CD8-positive, alpha-beta memory T cell (primary cell): ENCODE measurements at regions of chr11 and their contacts with region 1.

Region 1: DNA sequence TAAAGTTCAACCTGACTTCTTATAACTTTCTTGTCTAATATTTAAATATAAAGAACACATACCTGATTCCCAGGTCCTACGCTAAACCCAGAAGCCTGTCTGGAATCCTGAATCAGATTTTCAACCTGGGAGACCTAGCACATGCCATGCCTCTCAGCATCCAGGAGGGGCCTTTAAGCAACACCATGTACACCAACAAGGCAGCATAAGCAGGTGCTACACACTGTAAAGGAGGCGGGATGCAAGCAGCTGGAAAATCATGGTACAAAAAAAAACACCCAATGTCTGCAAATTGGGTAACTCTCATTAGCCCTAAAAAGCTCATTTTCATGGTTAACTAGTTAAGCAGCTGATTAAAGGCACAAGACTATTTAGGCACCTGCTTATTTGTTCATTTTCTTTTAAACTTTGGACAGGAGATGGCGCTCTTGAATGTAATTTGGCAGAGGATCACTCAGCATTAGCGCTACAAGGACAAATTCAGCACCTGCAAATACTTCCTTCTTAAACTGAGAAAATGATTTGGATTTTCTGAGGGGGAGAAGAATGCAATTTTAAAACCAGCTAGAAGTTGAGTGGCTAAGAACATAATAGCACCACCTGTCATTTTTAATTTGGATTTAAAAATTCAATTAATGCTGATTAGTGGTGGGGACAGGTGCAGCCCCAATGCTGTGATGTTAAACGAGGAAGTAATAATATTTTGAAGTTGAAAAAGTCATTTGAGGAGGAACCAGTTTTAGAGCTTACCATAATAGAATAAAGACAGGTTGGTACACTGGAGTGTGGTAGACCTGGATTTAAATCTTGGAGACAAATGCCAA is 104.0 kb downstream of the FAR1 start:
- DNase-seq: peak in 3 of 5 donors; percentile 6 to 67 (median 64)
- H3K4me3 ChIP-seq: no peak overlapping the region
- H3K4me3 Mint-ChIP-seq: no peak overlapping the region
- H3K27ac ChIP-seq: no peak overlapping the region
- H3K27ac Mint-ChIP-seq: no peak overlapping the region
- H3K4me1 ChIP-seq: no peaks in the 10 kb centered on the region
- H3K4me1 Mint-ChIP-seq: peaks cover 0 to 12% (median 7%) of the 10 kb centered on the region in 3 donors
- H3K27me3 ChIP-seq: no peaks in the 10 kb centered on the region
- H3K27me3 Mint-ChIP-seq: peaks cover 5 to 17% of the 10 kb centered on the region in 2 donors

Region 2: DNA sequence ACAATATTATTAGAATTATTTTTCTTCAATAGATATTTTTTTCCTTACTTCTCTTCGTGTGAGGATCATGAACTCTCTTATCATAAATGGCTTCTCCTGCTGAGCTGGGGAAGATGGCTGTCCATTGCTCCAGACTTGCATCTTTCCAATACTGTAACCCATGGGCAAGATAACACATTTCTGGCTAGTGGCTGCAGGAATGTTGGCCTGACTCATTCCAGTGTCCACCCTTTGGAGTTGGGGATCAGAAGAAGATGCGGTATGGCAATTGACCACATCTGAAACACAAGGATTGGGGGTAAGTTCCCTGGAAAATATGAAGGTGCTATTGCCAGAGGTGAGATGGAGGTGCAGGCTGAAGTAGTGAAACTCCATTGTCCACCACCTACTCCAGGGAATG is 11.2 kb before region 1 on chr11:
- CTCF ChIA-PET with region 1: interaction called, 10 read pairs
- POLR2A ChIA-PET with region 1: no interaction called
- DNase-seq: no peak
- H3K4me3 ChIP-seq: no peak overlapping the region
- H3K4me3 Mint-ChIP-seq: no peak overlapping the region
- H3K27ac ChIP-seq: no peak overlapping the region
- H3K27ac Mint-ChIP-seq: no peak overlapping the region
- H3K4me1 ChIP-seq: no peaks in the 10 kb centered on the region
- H3K4me1 Mint-ChIP-seq: no peaks in the 10 kb centered on the region
- H3K27me3 ChIP-seq: no peaks in the 10 kb centered on the region
- H3K27me3 Mint-ChIP-seq: peaks cover 0 to 5% of the 10 kb centered on the region in 2 donors

Region 3: DNA sequence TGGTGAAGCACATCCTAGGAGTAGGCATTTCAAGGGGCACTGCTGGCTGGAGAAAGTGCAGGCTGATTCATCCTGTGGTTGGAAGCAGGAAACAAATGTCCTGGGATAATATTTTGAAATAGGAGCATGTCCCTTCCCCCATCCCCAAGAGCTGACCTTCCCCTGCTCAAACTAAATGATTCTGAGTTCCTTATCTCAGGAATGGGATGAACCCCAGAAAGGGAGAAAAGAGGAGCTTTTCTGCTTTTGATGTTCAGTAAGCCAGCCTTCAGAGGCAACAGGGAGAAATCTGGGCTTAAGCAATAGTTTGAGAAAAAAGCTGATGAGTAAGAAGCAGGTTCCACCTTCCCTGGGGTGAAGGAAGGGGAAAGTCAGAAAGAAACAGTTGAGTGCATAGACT is 170.5 kb after region 1 on chr11:
- CTCF ChIA-PET with region 1: interaction called, 10 read pairs
- POLR2A ChIA-PET with region 1: no interaction called
- DNase-seq: no peak
- H3K4me3 ChIP-seq: no peak overlapping the region
- H3K4me3 Mint-ChIP-seq: no peak overlapping the region
- H3K27ac ChIP-seq: no peak overlapping the region
- H3K27ac Mint-ChIP-seq: peak overlapping the region in 2 of 8 donors; percentile 13 to 26
- H3K4me1 ChIP-seq: peaks cover 47% of the 10 kb centered on the region
- H3K4me1 Mint-ChIP-seq: peaks cover 30 to 62% (median 46%) of the 10 kb centered on the region in 3 donors
- H3K27me3 ChIP-seq: no peaks in the 10 kb centered on the region
- H3K27me3 Mint-ChIP-seq: peaks cover 0 to 4% of the 10 kb centered on the region in 2 donors

Region 4: GRCh38 chr11:13955971-13956421 is 183.6 kb after region 1 on chr11:
- CTCF ChIA-PET with region 1: interaction called, 15 read pairs
- POLR2A ChIA-PET with region 1: no interaction called
- DNase-seq: peak; percentile 22 to 68 (median 51)
- H3K4me3 ChIP-seq: no peak overlapping the region
- H3K4me3 Mint-ChIP-seq: no peak overlapping the region
- H3K27ac ChIP-seq: no peak overlapping the region
- H3K27ac Mint-ChIP-seq: no peak overlapping the region
- H3K4me1 ChIP-seq: peaks cover 9% of the 10 kb centered on the region
- H3K4me1 Mint-ChIP-seq: no peaks in the 10 kb centered on the region
- H3K27me3 ChIP-seq: peaks cover 3% of the 10 kb centered on the region
- H3K27me3 Mint-ChIP-seq: peaks cover 5 to 20% of the 10 kb centered on the region in 2 donors

Region 5: GRCh38 chr11:14148653-14149273 is 376.3 kb after region 1 on chr11:
- CTCF ChIA-PET with region 1: interaction called, 29 read pairs
- POLR2A ChIA-PET with region 1: no interaction called
- DNase-seq: peak in 2 of 5 donors; percentile 17 to 48
- H3K4me3 ChIP-seq: no peak overlapping the region
- H3K4me3 Mint-ChIP-seq: no peak overlapping the region
- H3K27ac ChIP-seq: no peak overlapping the region
- H3K27ac Mint-ChIP-seq: peak overlapping the region in 1 of 8 donors; percentile 9
- H3K4me1 ChIP-seq: no peaks in the 10 kb centered on the region
- H3K4me1 Mint-ChIP-seq: peaks cover 0 to 4% (median 3%) of the 10 kb centered on the region in 3 donors
- H3K27me3 ChIP-seq: no peaks in the 10 kb centered on the region
- H3K27me3 Mint-ChIP-seq: peaks cover 1 to 3% of the 10 kb centered on the region in 2 donors

Region 6: GRCh38 chr11:14242187-14242586 is 469.8 kb after region 1 on chr11:
- CTCF ChIA-PET with region 1: interaction called, 39 read pairs
- POLR2A ChIA-PET with region 1: no interaction called
- DNase-seq: no peak
- H3K4me3 ChIP-seq: no peak overlapping the region
- H3K4me3 Mint-ChIP-seq: no peak overlapping the region
- H3K27ac ChIP-seq: no peak overlapping the region
- H3K27ac Mint-ChIP-seq: no peak overlapping the region
- H3K4me1 ChIP-seq: no peaks in the 10 kb centered on the region
- H3K4me1 Mint-ChIP-seq: peaks cover under 1 to 7% (median 5%) of the 10 kb centered on the region in 3 donors
- H3K27me3 ChIP-seq: no peaks in the 10 kb centered on the region
- H3K27me3 Mint-ChIP-seq: peaks cover 0 to 6% of the 10 kb centered on the region in 2 donors

Region 7: GRCh38 chr11:14249121-14249963 is 476.9 kb after region 1 on chr11:
- CTCF ChIA-PET with region 1: interaction called, 57 read pairs
- POLR2A ChIA-PET with region 1: no interaction called
- DNase-seq: peak; percentile 55 to 77 (median 58)
- H3K4me3 ChIP-seq: peak overlapping the region; percentile 13
- H3K4me3 Mint-ChIP-seq: peak overlapping the region; percentile 57 to 85 (median 69)
- H3K27ac ChIP-seq: no peak overlapping the region
- H3K27ac Mint-ChIP-seq: peak overlapping the region in 1 of 8 donors; percentile 11
- H3K4me1 ChIP-seq: peaks cover 13% of the 10 kb centered on the region
- H3K4me1 Mint-ChIP-seq: peaks cover 20 to 29% (median 25%) of the 10 kb centered on the region in 3 donors
- H3K27me3 ChIP-seq: no peaks in the 10 kb centered on the region
- H3K27me3 Mint-ChIP-seq: peaks cover 0 to 6% of the 10 kb centered on the region in 2 donors